Activated CD8-positive, alpha-beta T cell treated with anti-CD3 and anti-CD28 coated beads for 36 hours (primary cell): ENCODE measurements at regions of chr12 and their contacts with region 1.

Region 1: DNA sequence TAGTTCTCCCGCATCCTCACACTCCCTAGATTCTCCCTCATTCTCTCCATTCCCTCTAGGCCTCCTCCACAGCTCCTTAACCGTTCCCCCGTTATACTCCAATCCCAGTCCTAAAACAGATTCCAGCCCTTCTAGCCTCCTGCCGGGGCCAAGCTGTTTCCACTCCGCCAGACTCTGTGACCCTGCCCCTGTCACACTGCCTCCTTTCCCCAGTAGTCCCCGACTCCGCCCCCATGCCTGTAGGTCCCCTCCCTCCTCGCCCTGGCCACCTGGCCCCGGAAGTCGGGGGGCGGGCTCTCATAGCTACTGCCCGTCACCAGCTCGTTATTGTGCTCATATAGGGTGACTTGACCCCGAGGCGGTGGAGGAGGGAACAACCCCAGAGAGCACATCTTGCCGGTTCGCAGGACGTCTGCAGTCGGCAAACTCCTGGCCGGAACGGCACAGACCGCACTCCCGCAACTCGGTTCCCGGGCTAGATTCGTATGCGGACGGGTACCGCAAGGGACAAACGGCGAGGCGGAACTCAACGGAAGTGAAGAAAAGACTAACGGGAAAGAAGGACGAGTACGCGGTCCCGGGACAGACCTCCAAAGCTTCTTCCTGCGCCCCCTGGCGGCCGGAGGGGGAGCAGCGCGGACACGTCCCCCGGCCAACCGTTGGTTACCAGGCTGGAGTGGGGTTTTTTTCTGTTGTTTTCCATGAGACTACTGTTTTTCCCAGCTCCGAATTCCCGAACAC is at the start of gene AAAS:
- DNase-seq: peak; percentile 99
- ATAC-seq: peak; percentile 87
- H3K4me3 Mint-ChIP-seq: peak within 1 kb of the TSS; percentile 83
- H3K27ac Mint-ChIP-seq: peak within 1 kb of the TSS; percentile 96
- H3K4me1 Mint-ChIP-seq: peaks cover 41% of the 10 kb centered on the region
- H3K27me3 Mint-ChIP-seq: no peaks in the 10 kb centered on the region
- CTCF ChIP-seq: peak; percentile 100
- total RNA-seq, gene AAAS: 81.3 to 87.6 TPM

Region 2: GRCh38 chr12:52924764-52925716 is 396.2 kb before region 1 on chr12:
- CTCF ChIA-PET with region 1: no interaction called
- POLR2A ChIA-PET with region 1: no interaction called
- intact Hi-C with region 1: no loop called
- DNase-seq: no peak
- ATAC-seq: no peak
- H3K4me3 Mint-ChIP-seq: no peak overlapping the region
- H3K27ac Mint-ChIP-seq: no peak overlapping the region
- H3K4me1 Mint-ChIP-seq: peaks cover 6% of the 10 kb centered on the region
- H3K27me3 Mint-ChIP-seq: peaks cover 2% of the 10 kb centered on the region
- CTCF ChIP-seq: no peak

Region 3: GRCh38 chr12:53220801-53221202 is 100.4 kb before region 1 on chr12:
- CTCF ChIA-PET with region 1: interaction called, 47 read pairs
- POLR2A ChIA-PET with region 1: interaction called, 6 read pairs
- intact Hi-C with region 1: no loop called
- DNase-seq: peak; percentile 92
- ATAC-seq: peak; percentile 65
- H3K4me3 Mint-ChIP-seq: peak overlapping the region; percentile 92
- H3K27ac Mint-ChIP-seq: peak overlapping the region; percentile 96
- H3K4me1 Mint-ChIP-seq: peaks cover 74% of the 10 kb centered on the region
- H3K27me3 Mint-ChIP-seq: no peaks in the 10 kb centered on the region
- CTCF ChIP-seq: no peak

Region 4: DNA sequence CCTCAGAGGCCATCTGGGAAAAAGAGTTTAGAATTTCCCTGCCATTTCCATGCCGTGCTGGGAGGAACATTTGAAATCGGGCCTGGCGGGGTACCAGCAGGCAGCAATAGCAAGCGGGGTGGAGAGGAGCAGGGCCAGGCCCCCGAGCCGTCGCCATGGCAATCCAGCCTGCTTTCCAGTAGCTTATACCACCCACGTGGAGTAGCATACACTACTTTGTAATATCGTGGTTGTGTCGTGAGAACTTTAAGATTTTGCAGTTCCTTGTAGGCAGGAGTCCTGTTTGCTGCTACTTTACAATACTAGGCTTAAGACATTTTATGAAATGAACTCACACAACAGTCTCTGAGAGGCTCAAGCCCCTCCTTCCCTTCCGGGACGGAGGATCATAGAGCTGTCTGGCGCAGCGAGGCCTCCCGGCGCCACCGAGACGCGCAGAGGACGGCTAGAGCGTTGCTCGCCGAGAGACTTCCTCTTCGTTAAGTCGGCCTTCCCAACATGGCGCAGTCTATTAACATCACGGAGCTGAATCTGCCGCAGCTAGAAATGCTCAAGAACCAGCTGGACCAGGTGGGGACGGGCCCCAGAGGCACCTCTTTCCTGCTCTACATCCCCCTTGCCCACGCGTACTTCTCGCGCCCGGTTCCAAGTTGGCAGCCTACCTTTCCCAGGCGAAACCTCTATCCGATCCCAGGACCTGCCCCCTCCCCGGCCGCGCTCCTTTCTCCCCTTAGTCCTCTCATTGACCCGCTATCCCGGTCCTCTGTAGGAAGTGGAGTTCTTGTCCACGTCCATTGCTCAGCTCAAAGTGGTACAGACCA is 26.0 kb before region 1 on chr12 and contains the start of gene PFDN5:
- CTCF ChIA-PET with region 1: interaction called, 143 read pairs
- POLR2A ChIA-PET with region 1: interaction called, 16 read pairs
- intact Hi-C with region 1: no loop called
- DNase-seq: peak; percentile 94
- ATAC-seq: peak; percentile 90
- H3K4me3 Mint-ChIP-seq: peak within 1 kb of the TSS; percentile 98
- H3K27ac Mint-ChIP-seq: peak within 1 kb of the TSS; percentile 91
- H3K4me1 Mint-ChIP-seq: peaks cover 43% of the 10 kb centered on the region
- H3K27me3 Mint-ChIP-seq: no peaks in the 10 kb centered on the region
- CTCF ChIP-seq: no peak
- total RNA-seq, gene PFDN5: 322 to 373 TPM

Region 5: GRCh38 chr12:53344824-53345485 is 23.7 kb after region 1 on chr12:
- CTCF ChIA-PET with region 1: interaction called, 293 read pairs
- POLR2A ChIA-PET with region 1: interaction called, 19 read pairs
- intact Hi-C with region 1: loop called (anchors 2 kb)
- DNase-seq: peak; percentile 85
- ATAC-seq: peak; percentile 86
- H3K4me3 Mint-ChIP-seq: peak overlapping the region; percentile 82
- H3K27ac Mint-ChIP-seq: peak overlapping the region; percentile 71
- H3K4me1 Mint-ChIP-seq: peaks cover 19% of the 10 kb centered on the region
- H3K27me3 Mint-ChIP-seq: peaks cover 3% of the 10 kb centered on the region
- CTCF ChIP-seq: peak; percentile 75

Region 6: DNA sequence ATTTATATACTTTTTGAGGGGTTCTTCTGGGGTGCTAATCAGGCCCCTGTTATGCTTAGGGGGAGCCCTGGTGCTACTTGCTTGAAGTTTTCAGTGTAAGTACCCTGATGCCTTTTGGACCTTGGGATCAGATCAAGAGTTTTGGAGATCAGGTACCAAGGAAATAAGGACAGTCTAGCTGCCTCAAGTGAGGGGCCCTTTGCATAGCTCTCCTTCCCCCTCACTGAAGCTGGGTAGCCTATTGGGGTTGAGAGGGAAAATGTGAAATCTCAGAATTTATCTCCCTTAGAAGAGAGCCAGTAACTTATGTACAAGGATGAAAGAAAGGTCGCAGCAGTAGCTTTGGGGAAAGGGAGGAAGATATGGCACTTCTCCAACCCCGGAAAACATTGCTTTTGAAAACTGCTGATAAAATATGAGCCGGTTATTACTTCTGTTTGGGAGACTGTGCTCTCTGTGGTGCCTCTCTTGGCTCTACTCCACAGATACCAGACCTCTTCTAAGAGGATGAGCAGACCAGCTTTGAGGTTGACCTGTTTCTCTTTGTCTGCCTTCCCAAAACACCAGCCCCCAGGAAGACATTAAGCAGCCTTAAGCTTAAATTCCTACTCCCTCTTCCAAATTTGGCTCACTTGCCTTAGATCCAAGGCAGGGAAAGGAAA is 93.6 kb after region 1 on chr12:
- CTCF ChIA-PET with region 1: interaction called, 45 read pairs
- POLR2A ChIA-PET with region 1: interaction called, 5 read pairs
- intact Hi-C with region 1: no loop called
- DNase-seq: no peak
- ATAC-seq: no peak
- H3K4me3 Mint-ChIP-seq: no peak overlapping the region
- H3K27ac Mint-ChIP-seq: peak overlapping the region; percentile 1
- H3K4me1 Mint-ChIP-seq: peaks cover 65% of the 10 kb centered on the region
- H3K27me3 Mint-ChIP-seq: no peaks in the 10 kb centered on the region
- CTCF ChIP-seq: no peak